Ovary (tissue), 10 donors: ENCODE measurements at regions of chr5 and their contacts with region 1.

Region 1: DNA sequence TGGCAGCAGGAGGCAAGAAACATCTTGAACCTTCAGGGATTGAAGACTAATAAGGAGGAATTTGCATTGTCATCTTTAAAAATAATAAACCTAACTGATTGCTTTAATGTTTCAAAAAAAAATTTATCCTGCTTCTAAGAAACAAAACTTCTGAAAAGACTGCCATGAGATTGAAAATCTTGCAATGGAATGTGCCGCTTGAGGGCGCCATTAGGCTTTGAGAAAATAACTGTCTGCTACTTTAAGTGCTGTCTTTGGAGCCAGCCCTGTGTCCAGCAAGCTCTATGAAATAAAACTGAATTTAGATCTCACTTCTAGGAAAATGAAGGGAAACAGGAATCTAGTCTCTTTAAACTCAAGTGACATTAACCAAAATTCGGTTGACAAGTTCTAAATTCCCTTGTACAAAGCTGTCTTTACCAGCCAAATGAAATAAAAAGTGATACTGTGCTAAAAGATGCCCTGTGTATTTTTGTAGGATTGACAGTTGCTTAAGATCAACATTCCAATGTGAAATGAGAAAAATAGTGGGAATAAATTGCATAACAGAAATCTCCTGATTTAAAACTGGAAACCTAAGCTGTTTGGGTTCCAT is 79.4 kb downstream of the ESM1 start:
- DNase-seq: peak; percentile 21 to 69 (median 41)
- H3K4me3 ChIP-seq: no peak overlapping the region
- H3K27ac ChIP-seq: no peak overlapping the region
- H3K4me1 ChIP-seq: peaks cover 3% of the 10 kb centered on the region
- H3K27me3 ChIP-seq: no peaks in the 10 kb centered on the region
- CTCF ChIP-seq: peak in 1 of 3 donors; percentile 22
- EP300 ChIP-seq: no peak
- POLR2A ChIP-seq: no peak

Region 2: DNA sequence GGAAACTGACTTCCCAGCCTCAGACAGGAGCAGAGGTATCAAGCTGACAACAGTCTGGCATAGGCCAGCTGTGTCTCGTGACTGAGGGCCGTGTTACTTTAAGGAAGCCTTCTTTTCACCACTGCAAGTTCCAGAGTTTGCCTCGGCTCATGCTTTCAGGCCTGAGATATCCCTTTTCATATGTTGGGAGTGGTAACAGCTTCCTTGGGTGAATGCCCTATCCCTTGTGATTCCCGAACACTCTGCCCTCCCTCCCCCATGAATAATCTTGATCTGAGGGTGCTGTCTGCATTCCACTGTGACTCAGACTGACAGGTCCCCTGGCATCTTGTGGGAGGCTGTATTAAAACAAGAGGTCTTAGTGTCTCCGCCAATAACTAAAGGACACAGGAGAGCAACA is 546.0 kb before region 1 on chr5:
- intact Hi-C with region 1: no loop called
- DNase-seq: no peak
- H3K4me3 ChIP-seq: no peak overlapping the region
- H3K27ac ChIP-seq: no peak overlapping the region
- H3K4me1 ChIP-seq: peaks cover 2% of the 10 kb centered on the region
- H3K27me3 ChIP-seq: no peaks in the 10 kb centered on the region
- CTCF ChIP-seq: no peak
- EP300 ChIP-seq: no peak
- POLR2A ChIP-seq: no peak

Region 3: GRCh38 chr5:55134053-55134722 is 228.1 kb after region 1 on chr5:
- intact Hi-C with region 1: loop called in 1 of 4 experiments (anchors 10 kb)
- DNase-seq: no peak
- H3K4me3 ChIP-seq: no peak overlapping the region
- H3K27ac ChIP-seq: no peak overlapping the region
- H3K4me1 ChIP-seq: no peaks in the 10 kb centered on the region
- H3K27me3 ChIP-seq: no peaks in the 10 kb centered on the region
- CTCF ChIP-seq: no peak
- EP300 ChIP-seq: no peak
- POLR2A ChIP-seq: no peak

Region 4: GRCh38 chr5:55146543-55147151 is 240.6 kb after region 1 on chr5:
- intact Hi-C with region 1: loop called in 1 of 4 experiments (anchors 10 kb)
- DNase-seq: peak; percentile 36 to 77 (median 72)
- H3K4me3 ChIP-seq: no peak overlapping the region
- H3K27ac ChIP-seq: no peak overlapping the region
- H3K4me1 ChIP-seq: no peaks in the 10 kb centered on the region
- H3K27me3 ChIP-seq: no peaks in the 10 kb centered on the region
- CTCF ChIP-seq: peak; percentile 53 to 62 (median 62)
- EP300 ChIP-seq: no peak
- POLR2A ChIP-seq: no peak